ENCODE measurements at regions of chr7 and their contacts with region 1.

Region 1: GRCh38 chr7:17095001-17095574 is 203.4 kb upstream of the AHR start:
- DNase-seq: peak; percentile 99
- H3K4me3 ChIP-seq: no peak overlapping the region
- H3K27ac ChIP-seq: peak overlapping the region; percentile 87
- H3K4me1 ChIP-seq: peaks cover 57% of the 10 kb centered on the region
- H3K27me3 ChIP-seq: no peaks in the 10 kb centered on the region
- CTCF ChIP-seq: no peak

Region 2: DNA sequence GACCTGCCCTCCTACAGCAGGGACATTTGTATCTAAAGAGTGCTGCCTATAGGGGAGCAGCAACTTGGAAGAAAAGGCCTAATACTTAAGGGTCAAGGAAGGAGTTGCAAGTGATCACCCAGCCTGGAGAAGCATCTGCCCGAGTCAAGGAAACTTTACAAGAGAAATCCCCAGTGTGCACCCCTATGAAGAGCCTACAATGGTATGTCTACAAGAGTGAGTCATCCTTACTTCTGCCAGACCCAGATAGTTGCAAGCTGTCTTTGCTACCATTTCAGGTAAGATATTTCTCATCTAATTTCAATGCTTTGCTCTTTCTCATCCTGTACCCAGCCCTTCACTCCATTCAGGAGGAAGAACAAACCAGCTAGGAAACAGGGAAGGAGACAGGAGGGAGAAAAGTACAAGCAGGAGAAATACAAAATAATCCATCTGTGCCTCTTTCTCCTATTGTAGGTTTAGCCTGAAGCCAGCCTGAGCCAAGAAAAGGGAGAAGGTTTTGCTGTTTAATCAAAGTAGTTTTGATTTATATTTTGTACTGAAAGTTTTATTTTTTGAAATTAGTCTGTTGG is 178.9 kb before region 1 on chr7:
- CTCF ChIA-PET with region 1: no interaction called
- dilution Hi-C with region 1: no loop called
- in situ Hi-C with region 1: no loop called
- intact Hi-C with region 1: no loop called
- DNase-seq: peak; percentile 89
- H3K4me3 ChIP-seq: peak overlapping the region; percentile 21 to 45 (median 27)
- H3K27ac ChIP-seq: peak overlapping the region; percentile 62
- H3K4me1 ChIP-seq: peaks cover 33% of the 10 kb centered on the region
- H3K27me3 ChIP-seq: no peaks in the 10 kb centered on the region
- CTCF ChIP-seq: no peak

Region 3: GRCh38 chr7:17009007-17009719 is 85.9 kb before region 1 on chr7:
- CTCF ChIA-PET with region 1: no interaction called
- dilution Hi-C with region 1: no loop called
- in situ Hi-C with region 1: no loop called
- intact Hi-C with region 1: loop called (anchors 5 kb)
- DNase-seq: no peak
- H3K4me3 ChIP-seq: no peak overlapping the region
- H3K27ac ChIP-seq: no peak overlapping the region
- H3K4me1 ChIP-seq: peaks cover 17% of the 10 kb centered on the region
- H3K27me3 ChIP-seq: no peaks in the 10 kb centered on the region
- CTCF ChIP-seq: peak; percentile 44 to 60

Region 4: GRCh38 chr7:17027143-17027788 is 67.8 kb before region 1 on chr7:
- CTCF ChIA-PET with region 1: no interaction called
- dilution Hi-C with region 1: no loop called
- in situ Hi-C with region 1: no loop called
- intact Hi-C with region 1: no loop called
- DNase-seq: no peak
- H3K4me3 ChIP-seq: no peak overlapping the region
- H3K27ac ChIP-seq: no peak overlapping the region
- H3K4me1 ChIP-seq: no peaks in the 10 kb centered on the region
- H3K27me3 ChIP-seq: no peaks in the 10 kb centered on the region
- CTCF ChIP-seq: no peak

Region 5: DNA sequence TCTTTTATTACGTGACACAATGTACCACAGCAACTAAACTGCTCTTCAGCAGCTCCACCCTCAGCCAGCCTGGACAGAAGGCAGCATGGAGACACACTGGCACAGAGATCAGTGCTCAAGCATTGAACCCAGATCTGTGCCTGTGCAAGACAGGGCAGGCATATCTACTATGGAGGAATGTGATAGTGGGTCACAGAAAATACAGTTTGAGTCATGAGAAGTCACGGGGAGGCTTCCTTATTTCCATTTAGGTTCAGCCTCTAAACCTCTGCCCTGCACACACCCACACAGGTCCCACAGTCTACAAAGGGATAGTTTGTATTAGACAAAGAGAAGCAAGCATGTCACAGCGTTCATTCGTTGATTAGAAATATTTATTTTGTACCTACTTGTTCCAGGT is 25.9 kb before region 1 on chr7:
- CTCF ChIA-PET with region 1: no interaction called
- dilution Hi-C with region 1: no loop called
- in situ Hi-C with region 1: no loop called
- intact Hi-C with region 1: loop called (anchors 2 kb)
- DNase-seq: peak; percentile 81
- H3K4me3 ChIP-seq: no peak overlapping the region
- H3K27ac ChIP-seq: peak overlapping the region; percentile 16
- H3K4me1 ChIP-seq: peaks cover 16% of the 10 kb centered on the region
- H3K27me3 ChIP-seq: no peaks in the 10 kb centered on the region
- CTCF ChIP-seq: peak in 1 of 2 donors; percentile 8

Region 6: DNA sequence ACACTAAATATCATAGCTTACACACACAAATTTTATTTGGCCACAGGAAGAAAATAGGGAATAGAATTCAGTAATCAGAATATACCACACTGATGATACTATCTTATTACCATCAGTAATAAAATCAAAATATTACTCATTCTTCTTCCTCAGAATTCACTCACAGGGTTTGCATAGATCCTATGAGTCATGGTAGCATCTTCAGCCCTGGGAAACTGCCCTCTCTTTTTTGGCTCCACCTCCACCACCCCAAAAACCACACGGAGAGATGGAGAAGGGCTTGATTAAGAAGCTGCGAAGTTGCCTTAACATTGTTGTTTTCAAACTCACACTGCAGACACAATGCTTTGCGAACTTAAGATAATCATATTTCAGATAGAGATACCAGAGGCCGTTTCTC is 49.2 kb after region 1 on chr7:
- CTCF ChIA-PET with region 1: no interaction called
- dilution Hi-C with region 1: no loop called
- in situ Hi-C with region 1: no loop called
- intact Hi-C with region 1: loop called (anchors 5 kb)
- DNase-seq: peak; percentile 78
- H3K4me3 ChIP-seq: no peak overlapping the region
- H3K27ac ChIP-seq: no peak overlapping the region
- H3K4me1 ChIP-seq: peaks cover 38% of the 10 kb centered on the region
- H3K27me3 ChIP-seq: no peaks in the 10 kb centered on the region
- CTCF ChIP-seq: no peak

Region 7: GRCh38 chr7:17680943-17681351 is 585.9 kb after region 1 on chr7:
- CTCF ChIA-PET with region 1: no interaction called
- dilution Hi-C with region 1: no loop called
- in situ Hi-C with region 1: no loop called
- intact Hi-C with region 1: loop called (anchors 10 kb)
- DNase-seq: peak; percentile 61
- H3K4me3 ChIP-seq: no peak overlapping the region
- H3K27ac ChIP-seq: peak overlapping the region; percentile 94
- H3K4me1 ChIP-seq: peaks cover 50% of the 10 kb centered on the region
- H3K27me3 ChIP-seq: no peaks in the 10 kb centered on the region
- CTCF ChIP-seq: peak; percentile 39 to 43